Left ventricle myocardium inferior (tissue), 1 donor: ENCODE measurements at regions of chr5 and their contacts with region 1.

Region 1: GRCh38 chr5:61319388-61320146 is 12.5 kb upstream of the ZSWIM6 start:
- DNase-seq: no peak
- H3K4me3 ChIP-seq: peak overlapping the region; percentile 29
- H3K27ac ChIP-seq: peak overlapping the region; percentile 47
- H3K4me1 ChIP-seq: peaks cover 18% of the 10 kb centered on the region
- H3K27me3 ChIP-seq: no peaks in the 10 kb centered on the region
- CTCF ChIP-seq: no peak

Region 2: DNA sequence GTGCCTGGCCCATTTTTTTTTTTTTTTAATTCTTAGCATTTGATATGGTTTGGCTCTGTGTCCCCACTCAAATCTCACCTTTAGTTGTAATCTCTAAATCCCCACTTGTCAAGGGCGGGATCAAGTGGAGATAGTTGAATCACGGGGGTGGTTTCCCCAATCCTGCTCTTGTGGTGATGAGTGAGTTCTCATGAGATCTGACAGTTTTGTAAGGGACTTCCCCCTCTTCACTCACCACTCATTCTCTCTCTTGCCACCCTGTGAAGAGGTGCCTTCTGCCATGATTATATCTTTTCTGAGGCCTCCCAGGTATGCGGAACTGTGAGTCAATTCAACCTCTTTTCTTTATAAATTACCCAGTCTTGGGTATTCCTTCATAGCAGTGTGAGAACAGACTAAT is 347.3 kb before region 1 on chr5:
- intact Hi-C with region 1: no loop called
- DNase-seq: no peak
- H3K4me3 ChIP-seq: no peak overlapping the region
- H3K27ac ChIP-seq: no peak overlapping the region
- H3K4me1 ChIP-seq: peaks cover 17% of the 10 kb centered on the region
- H3K27me3 ChIP-seq: no peaks in the 10 kb centered on the region
- CTCF ChIP-seq: no peak

Region 3: DNA sequence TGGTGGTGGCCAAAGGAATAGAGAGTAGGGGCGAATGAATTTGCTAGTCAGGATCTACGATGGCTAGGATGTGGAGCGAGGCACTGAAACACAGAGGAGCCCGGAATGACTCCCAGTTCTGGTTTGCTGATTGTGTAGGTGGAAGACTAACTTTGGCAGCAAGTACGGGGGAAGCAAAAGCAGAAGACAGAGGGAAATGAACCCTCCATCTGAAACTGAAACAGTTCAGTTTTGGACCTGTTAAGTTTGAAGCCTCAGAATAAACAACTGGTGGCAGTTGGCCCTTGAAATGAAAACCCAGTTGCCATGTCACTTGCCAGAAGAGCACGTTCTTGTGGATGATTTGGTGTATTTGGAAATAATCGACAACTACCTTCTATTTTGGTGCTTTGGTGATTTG is 141.9 kb before region 1 on chr5:
- intact Hi-C with region 1: loop called (anchors 10 kb)
- DNase-seq: no peak
- H3K4me3 ChIP-seq: no peak overlapping the region
- H3K27ac ChIP-seq: no peak overlapping the region
- H3K4me1 ChIP-seq: peaks cover 4% of the 10 kb centered on the region
- H3K27me3 ChIP-seq: no peaks in the 10 kb centered on the region
- CTCF ChIP-seq: no peak

Region 4: DNA sequence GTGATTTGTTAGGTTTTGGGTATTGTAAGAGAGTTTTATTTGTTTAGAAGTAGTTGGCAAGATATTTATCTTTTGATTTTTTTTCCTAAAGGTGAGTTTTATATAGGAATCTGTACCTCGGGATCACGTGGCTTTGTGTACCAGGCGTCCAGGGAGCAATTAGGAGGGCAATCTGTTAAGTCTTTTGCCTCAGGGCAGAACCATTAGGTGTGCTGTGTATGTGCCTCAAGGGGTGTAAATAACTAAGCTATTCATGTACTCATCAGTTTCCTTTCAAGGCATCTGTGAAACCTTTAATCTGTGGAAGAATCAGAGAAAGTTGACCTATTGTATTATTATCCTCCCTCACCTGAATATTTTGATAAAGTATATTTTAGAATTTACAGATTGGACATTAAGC is 51.9 kb after region 1 on chr5:
- intact Hi-C with region 1: no loop called
- DNase-seq: no peak
- H3K4me3 ChIP-seq: no peak overlapping the region
- H3K27ac ChIP-seq: no peak overlapping the region
- H3K4me1 ChIP-seq: no peaks in the 10 kb centered on the region
- H3K27me3 ChIP-seq: no peaks in the 10 kb centered on the region
- CTCF ChIP-seq: no peak